Panc1 (cell line): ENCODE measurements at regions of chr11 and their contacts with region 1.

Region 1: DNA sequence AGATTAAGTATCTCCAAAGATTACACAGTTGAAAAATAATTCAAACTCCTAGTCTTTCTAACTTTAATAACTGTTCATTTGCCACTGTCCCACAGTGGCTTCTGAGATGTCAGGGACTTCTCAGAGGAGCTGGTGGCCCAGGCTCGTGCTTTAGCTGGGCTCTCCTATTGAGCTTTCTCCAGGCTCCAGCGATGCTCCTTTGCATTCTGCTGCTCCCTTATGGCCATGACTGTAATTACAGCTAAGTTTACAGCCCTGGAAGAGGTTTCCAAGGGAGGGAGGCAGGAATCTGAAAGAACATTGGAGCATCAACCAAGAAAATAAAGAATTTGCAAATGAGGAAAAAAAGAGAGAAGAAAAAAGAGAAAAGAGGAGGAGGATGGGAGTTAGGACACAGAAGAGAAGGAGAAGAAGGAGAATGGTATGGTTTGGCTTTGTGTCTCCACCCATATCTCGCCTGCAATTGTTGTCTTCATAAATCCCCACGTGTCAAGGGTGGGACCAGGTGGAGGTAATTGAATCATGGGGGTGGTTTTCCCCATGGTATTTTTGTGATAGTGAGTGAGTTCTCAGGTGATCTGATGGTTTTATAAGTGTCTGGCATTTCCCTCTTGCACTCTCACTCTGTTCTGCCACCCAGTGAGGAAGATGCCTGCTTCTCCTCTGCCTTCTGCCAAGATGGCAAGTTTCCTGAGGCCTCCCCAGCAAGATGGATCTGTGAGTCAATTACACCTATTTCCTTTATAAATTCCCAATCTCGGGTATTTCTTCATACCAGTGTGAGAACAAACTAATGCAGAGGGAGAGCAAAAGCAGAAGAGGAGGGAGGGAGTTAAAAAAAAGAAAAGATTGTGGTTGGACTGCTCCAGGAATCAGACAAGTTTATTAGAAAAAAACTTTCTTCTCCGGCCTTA is 857.0 kb downstream of the KCNA4 start:
- DNase-seq: peak; percentile 17
- ATAC-seq: peak; percentile 84
- H3K4me3 ChIP-seq: no peak overlapping the region
- H3K27ac ChIP-seq: no peak overlapping the region
- H3K4me1 ChIP-seq: no peaks in the 10 kb centered on the region
- H3K27me3 ChIP-seq: no peaks in the 10 kb centered on the region
- CTCF ChIP-seq: peak; percentile 79

Region 2: GRCh38 chr11:28999620-29000019 is 160.2 kb before region 1 on chr11:
- CTCF ChIA-PET with region 1: no interaction called
- POLR2A ChIA-PET with region 1: no interaction called
- in situ Hi-C with region 1: no loop called
- intact Hi-C with region 1: no loop called
- DNase-seq: no peak
- ATAC-seq: no peak
- H3K4me3 ChIP-seq: no peak overlapping the region
- H3K27ac ChIP-seq: no peak overlapping the region
- H3K4me1 ChIP-seq: no peaks in the 10 kb centered on the region
- H3K27me3 ChIP-seq: no peaks in the 10 kb centered on the region
- CTCF ChIP-seq: no peak

Region 3: DNA sequence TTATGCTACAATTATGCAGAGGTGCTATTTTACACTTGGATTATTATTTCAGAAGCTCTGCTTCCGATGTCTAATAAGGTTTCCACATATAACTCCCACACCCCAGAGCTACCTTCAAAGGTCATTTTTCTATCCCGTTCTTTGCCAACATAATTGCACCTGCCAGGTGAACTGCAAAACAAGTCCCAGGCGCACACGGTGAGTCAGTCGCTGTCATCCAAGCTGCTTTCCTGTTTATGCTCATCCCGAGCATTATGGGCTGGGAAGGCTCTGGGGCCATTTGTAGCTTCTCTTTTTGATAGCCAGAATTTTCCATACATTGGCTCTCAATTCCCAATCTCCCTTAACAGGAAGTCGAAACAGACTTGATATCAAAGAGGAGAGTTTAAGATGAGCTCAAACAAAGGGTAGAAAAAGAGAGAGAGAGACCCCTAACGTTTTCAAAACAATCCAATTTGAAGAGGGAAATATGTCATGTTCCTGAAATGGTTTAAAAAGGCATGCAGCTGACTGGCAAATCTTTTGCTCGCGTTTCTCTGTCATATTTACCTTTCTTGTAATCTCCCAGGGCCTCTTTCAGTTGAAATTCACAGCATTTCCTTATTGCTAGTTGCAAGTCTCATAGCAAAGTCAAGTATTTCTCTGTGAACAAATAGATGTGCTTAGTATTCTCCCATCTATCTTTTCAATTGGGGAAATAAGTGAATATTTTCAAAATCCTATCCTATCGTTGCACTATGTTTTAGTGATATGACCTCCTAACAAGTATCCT is 41.2 kb after region 1 on chr11:
- CTCF ChIA-PET with region 1: interaction called, 3 read pairs
- POLR2A ChIA-PET with region 1: no interaction called
- in situ Hi-C with region 1: no loop called
- intact Hi-C with region 1: loop called (anchors 1 kb)
- DNase-seq: no peak
- ATAC-seq: no peak
- H3K4me3 ChIP-seq: no peak overlapping the region
- H3K27ac ChIP-seq: no peak overlapping the region
- H3K4me1 ChIP-seq: no peaks in the 10 kb centered on the region
- H3K27me3 ChIP-seq: no peaks in the 10 kb centered on the region
- CTCF ChIP-seq: no peak